ENCODE measurements at regions of chr20 and their contacts with region 1.

Region 1: GRCh38 chr20:14799545-14800216 is 462.3 kb upstream of the FLRT3 start:
- DNase-seq: no peak
- ATAC-seq: no peak
- H3K4me3 ChIP-seq: no peak overlapping the region
- H3K27ac ChIP-seq: no peak overlapping the region
- H3K4me1 ChIP-seq: no peaks in the 10 kb centered on the region
- H3K27me3 ChIP-seq: no peaks in the 10 kb centered on the region
- CTCF ChIP-seq: no peak
- POLR2A ChIP-seq: no peak

Region 2: GRCh38 chr20:14845199-14846160 is 45.8 kb after region 1 on chr20:
- intact Hi-C with region 1: loop called in 1 of 10 experiments (anchors 2 kb)
- DNase-seq: no peak
- ATAC-seq: no peak
- H3K4me3 ChIP-seq: no peak overlapping the region
- H3K27ac ChIP-seq: no peak overlapping the region
- H3K4me1 ChIP-seq: no peaks in the 10 kb centered on the region
- H3K27me3 ChIP-seq: no peaks in the 10 kb centered on the region
- CTCF ChIP-seq: no peak
- POLR2A ChIP-seq: no peak

Measured in heart left ventricle (tissue), 16 donors.